BJ (cell line): ENCODE measurements at regions of chr4 and their contacts with region 1.

Region 1: GRCh38 chr4:150867148-150867547 is 147.9 kb downstream of the LRBA start:
- DNase-seq: peak; percentile 23
- H3K4me3 ChIP-seq: no peak overlapping the region
- H3K27me3 ChIP-seq: no peaks in the 10 kb centered on the region
- CTCF ChIP-seq: peak; percentile 45

Region 2: GRCh38 chr4:150283689-150284088 is 583.5 kb before region 1 on chr4:
- CTCF ChIA-PET with region 1: interaction called, 10 read pairs
- POLR2A ChIA-PET with region 1: no interaction called
- DNase-seq: peak; percentile 95
- H3K4me3 ChIP-seq: no peak overlapping the region
- H3K27me3 ChIP-seq: no peaks in the 10 kb centered on the region
- CTCF ChIP-seq: no peak

Region 3: DNA sequence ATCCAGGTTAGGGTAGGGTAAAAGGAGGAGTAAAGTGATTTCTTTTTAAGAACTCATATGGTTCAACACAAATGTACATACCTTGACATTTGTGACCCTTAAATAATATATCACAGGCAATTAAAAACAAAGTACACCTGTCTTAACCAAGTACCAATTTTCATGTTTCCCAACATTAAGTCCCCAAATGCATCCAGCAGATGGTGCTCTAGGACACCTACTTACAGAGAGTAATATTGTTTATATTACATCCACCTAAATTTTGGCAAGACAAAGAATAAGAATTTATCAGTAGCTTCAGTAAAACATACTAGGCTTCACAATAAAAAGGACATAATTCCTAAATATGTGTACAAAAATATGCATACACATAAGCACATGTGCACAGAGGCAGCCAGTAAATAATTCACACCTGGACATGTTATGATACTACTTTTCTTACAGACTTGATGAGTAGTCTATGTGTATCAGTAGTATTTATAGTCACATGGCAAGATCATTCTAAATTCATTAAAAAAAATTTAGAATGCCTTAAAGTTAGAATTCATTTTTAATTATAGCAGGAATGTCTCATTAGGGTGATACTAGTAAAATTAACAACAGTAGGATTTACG is 569.2 kb before region 1 on chr4:
- CTCF ChIA-PET with region 1: interaction called, 57 read pairs
- POLR2A ChIA-PET with region 1: interaction called, 3 read pairs
- DNase-seq: no peak
- H3K4me3 ChIP-seq: no peak overlapping the region
- H3K27me3 ChIP-seq: no peaks in the 10 kb centered on the region
- CTCF ChIP-seq: peak; percentile 69

Region 4: DNA sequence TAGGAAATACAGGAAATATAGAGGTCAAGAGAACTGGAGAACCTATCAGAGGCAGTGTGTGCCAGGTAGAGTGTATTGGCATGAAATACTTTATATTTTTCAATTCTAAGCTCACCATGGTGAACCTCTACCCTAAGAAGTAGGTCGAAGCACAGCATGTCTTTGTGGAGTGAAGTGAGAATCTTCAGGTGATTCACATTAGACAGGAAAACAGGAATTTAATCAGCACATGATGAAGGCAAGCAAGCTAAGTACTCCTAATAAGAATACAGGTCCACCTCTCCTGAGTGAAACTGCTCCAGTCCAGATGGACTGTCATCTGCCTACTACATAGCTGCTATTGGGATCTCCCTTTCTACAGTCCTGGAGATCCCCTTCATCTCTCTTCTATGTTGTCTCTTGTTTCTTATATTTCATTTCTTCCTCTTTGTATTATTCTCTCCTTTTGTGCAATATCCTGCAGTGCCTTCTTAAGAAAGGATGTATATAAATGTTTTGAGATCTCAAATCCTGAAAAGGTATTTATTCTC is 11.1 kb before region 1 on chr4:
- CTCF ChIA-PET with region 1: interaction called, 17 read pairs
- POLR2A ChIA-PET with region 1: no interaction called
- DNase-seq: no peak
- H3K4me3 ChIP-seq: no peak overlapping the region
- H3K27me3 ChIP-seq: no peaks in the 10 kb centered on the region
- CTCF ChIP-seq: no peak